ENCODE measurements at regions of chr2 and their contacts with region 1.

Region 1: GRCh38 chr2:147989809-147990403 is 30.6 kb downstream of the ORC4 start:
- DNase-seq: no peak

Region 2: GRCh38 chr2:148493822-148494563 is 504.1 kb after region 1 on chr2:
- intact Hi-C with region 1: loop called in 1 of 2 experiments (anchors 10 kb)
- DNase-seq: no peak

Measured in posterior vena cava (tissue), 2 donors.